ENCODE measurements at regions of chr11 and their contacts with region 1.

Region 1: DNA sequence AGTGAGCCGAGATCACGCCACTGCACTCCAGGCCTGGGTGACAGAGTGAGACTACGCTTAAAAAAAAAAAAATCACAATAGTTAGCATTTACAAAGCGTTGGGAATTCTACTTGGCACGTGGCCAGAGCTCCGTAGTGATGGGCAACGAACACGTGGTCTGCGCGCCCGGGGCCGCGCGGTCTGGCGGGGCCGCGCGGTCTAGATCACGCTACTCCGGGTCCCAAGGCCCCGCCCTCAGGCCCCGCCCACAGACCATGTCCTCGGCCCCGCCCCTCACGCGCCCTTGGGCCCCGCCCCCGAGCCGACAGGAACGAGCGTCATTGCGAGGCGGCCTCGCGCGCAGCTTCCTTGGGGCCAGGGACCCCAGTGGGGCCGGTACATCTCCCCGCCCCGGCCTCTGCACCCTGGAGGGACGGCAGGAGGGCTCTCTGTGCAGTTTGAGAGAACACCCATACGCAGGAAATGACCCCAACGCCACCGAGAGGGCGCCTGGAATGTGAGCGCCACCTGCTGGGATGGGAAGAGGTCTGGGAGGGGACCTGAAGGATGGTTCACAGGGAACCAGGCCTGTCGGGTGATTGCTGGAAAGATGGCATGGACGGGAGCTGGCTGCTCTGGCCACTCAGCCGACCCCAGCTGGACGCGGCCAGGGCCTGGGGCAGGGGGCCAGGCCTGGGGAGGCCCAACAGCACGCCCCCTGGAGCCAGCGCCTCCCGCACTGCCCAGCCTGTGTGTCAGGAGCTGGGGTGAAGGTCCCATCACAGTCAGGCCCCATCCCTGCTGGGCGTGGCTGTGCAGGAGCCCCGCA is 2.0 kb upstream of the PTDSS2 start:
- DNase-seq: peak; percentile 96 to 97
- H3K4me3 ChIP-seq: peak overlapping the region; percentile 39
- H3K4me3 Mint-ChIP-seq: peak overlapping the region; percentile 85
- H3K27ac Mint-ChIP-seq: peak overlapping the region; percentile 77
- H3K4me1 ChIP-seq: peaks cover 41% of the 10 kb centered on the region
- H3K4me1 Mint-ChIP-seq: peaks cover 32% of the 10 kb centered on the region
- H3K27me3 ChIP-seq: no peaks in the 10 kb centered on the region
- H3K27me3 Mint-ChIP-seq: no peaks in the 10 kb centered on the region
- CTCF ChIP-seq: peak; percentile 90 to 98

Region 2: DNA sequence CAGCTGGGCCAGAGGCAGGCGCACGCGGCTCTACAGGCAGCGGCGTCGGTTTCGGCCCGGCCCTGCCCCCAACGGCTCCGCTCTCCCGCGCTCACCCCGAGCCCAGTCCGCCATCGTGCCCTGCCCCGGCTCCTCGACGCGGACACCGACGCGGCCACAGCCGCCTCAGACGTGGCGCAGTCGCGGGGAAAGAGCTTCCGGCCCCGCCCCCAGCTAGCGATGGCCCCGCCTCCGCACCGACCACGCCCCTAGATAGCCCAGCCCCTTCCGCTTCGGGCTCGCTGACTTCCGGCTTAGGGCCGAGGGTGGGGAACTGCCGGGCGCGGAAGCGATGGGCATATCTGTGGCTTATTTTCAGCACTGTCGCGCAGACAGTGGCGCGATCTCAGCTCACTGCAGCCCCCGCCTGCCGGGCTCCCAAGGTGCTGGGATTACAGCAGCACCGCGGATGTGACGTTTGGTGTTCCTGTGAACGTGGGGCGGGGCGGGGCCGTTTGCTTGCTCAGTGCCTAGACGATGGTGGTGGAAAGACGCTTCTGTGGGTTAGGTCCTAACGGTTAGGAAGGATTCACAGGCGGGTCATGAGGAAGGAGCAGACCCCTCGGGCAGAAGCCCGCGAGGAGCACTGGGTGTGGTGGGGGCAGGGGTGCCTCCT is 240.8 kb before region 1 on chr11 and contains the starts of genes BET1L and RIC8A:
- CTCF ChIA-PET with region 1: interaction called, 20 read pairs
- POLR2A ChIA-PET with region 1: interaction called, 8 read pairs
- intact Hi-C with region 1: loop called (anchors 5 kb)
- DNase-seq: peak; percentile 98
- H3K4me3 ChIP-seq: peak within 1 kb of the TSS; percentile 73
- H3K4me3 Mint-ChIP-seq: peak within 1 kb of the TSS; percentile 92
- H3K27ac Mint-ChIP-seq: peak within 1 kb of the TSS; percentile 99
- H3K4me1 ChIP-seq: peaks cover 20% of the 10 kb centered on the region
- H3K4me1 Mint-ChIP-seq: peaks cover 6% of the 10 kb centered on the region
- H3K27me3 ChIP-seq: no peaks in the 10 kb centered on the region
- H3K27me3 Mint-ChIP-seq: no peaks in the 10 kb centered on the region
- CTCF ChIP-seq: no peak
- total RNA-seq, gene BET1L: 56.8 and 57.4 TPM in 2 replicates
- total RNA-seq, gene RIC8A: 97.1 and 111 TPM in 2 replicates

Region 3: GRCh38 chr11:304915-305843 is 142.9 kb before region 1 on chr11:
- CTCF ChIA-PET with region 1: interaction called, 16 read pairs
- POLR2A ChIA-PET with region 1: no interaction called
- intact Hi-C with region 1: loop called (anchors 1 kb)
- DNase-seq: peak; percentile 71 to 75
- H3K4me3 ChIP-seq: no peak overlapping the region
- H3K4me3 Mint-ChIP-seq: peak overlapping the region; percentile 4
- H3K27ac Mint-ChIP-seq: no peak overlapping the region
- H3K4me1 ChIP-seq: peaks cover 43% of the 10 kb centered on the region
- H3K4me1 Mint-ChIP-seq: peaks cover 30% of the 10 kb centered on the region
- H3K27me3 ChIP-seq: no peaks in the 10 kb centered on the region
- H3K27me3 Mint-ChIP-seq: no peaks in the 10 kb centered on the region
- CTCF ChIP-seq: peak; percentile 56 to 82

Region 4: GRCh38 chr11:369336-370018 is 78.7 kb before region 1 on chr11 and contains the start of gene B4GALNT4:
- CTCF ChIA-PET with region 1: interaction called, 14 read pairs
- POLR2A ChIA-PET with region 1: no interaction called
- intact Hi-C with region 1: loop called (anchors 10 kb)
- DNase-seq: peak in 1 of 2 experiments; percentile 60
- H3K4me3 ChIP-seq: peak within 1 kb of the TSS; percentile 56
- H3K4me3 Mint-ChIP-seq: peak within 1 kb of the TSS; percentile 91
- H3K27ac Mint-ChIP-seq: no peak within 1 kb of the TSS
- H3K4me1 ChIP-seq: peaks cover 26% of the 10 kb centered on the region
- H3K4me1 Mint-ChIP-seq: peaks cover 15% of the 10 kb centered on the region
- H3K27me3 ChIP-seq: no peaks in the 10 kb centered on the region
- H3K27me3 Mint-ChIP-seq: peaks cover 2% of the 10 kb centered on the region
- CTCF ChIP-seq: no peak
- total RNA-seq, gene B4GALNT4: 30.7 and 35.6 TPM in 2 replicates

Region 5: GRCh38 chr11:406978-407739 is 41.0 kb before region 1 on chr11:
- CTCF ChIA-PET with region 1: interaction called, 12 read pairs
- POLR2A ChIA-PET with region 1: no interaction called
- intact Hi-C with region 1: loop called (anchors 1 kb)
- DNase-seq: no peak
- H3K4me3 ChIP-seq: no peak overlapping the region
- H3K4me3 Mint-ChIP-seq: no peak overlapping the region
- H3K27ac Mint-ChIP-seq: no peak overlapping the region
- H3K4me1 ChIP-seq: peaks cover 9% of the 10 kb centered on the region
- H3K4me1 Mint-ChIP-seq: no peaks in the 10 kb centered on the region
- H3K27me3 ChIP-seq: no peaks in the 10 kb centered on the region
- H3K27me3 Mint-ChIP-seq: no peaks in the 10 kb centered on the region
- CTCF ChIP-seq: no peak

Region 6: DNA sequence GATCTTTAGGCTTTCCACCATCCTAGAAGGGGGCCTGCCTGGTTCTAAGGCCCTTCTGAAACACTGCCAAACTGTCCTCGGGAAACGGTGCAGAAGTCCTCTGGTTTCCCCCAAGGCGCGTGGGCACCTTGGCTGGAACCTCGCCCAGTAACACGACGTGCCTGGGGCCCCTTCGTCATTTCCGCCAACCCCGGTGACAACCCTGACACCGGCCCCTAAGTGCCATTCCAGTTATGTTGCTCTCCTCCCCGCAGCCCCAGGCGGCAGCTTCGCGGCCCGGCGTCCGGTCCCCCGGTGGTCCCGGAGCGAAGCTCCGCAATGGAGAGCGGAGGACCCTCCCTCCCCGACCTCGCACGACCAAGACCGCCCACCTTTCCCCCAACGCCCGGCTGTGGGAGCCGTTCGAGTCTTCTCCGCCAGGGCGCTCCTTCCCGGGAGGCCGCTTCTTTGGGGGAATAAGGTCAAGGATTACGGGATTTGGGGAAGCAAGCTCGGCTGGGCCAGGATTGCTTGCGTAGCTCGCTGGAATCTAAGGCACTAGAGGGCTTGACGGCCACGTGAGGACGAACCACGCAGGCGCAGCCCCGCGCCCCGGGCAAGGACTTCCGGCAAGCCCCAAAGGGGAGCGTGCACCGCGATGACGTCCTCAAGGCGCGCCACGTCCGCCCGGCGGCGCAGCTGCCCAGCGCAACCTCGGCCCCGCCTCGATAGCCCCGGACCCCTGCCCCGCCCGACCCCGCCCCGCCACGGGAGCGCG is 58.3 kb after region 1 on chr11:
- CTCF ChIA-PET with region 1: interaction called, 4 read pairs
- POLR2A ChIA-PET with region 1: interaction called, 5 read pairs
- intact Hi-C with region 1: loop called (anchors 5 kb)
- DNase-seq: peak; percentile 98 to 99
- H3K4me3 ChIP-seq: peak overlapping the region; percentile 100
- H3K4me3 Mint-ChIP-seq: peak overlapping the region; percentile 96
- H3K27ac Mint-ChIP-seq: peak overlapping the region; percentile 100
- H3K4me1 ChIP-seq: peaks cover 7% of the 10 kb centered on the region
- H3K4me1 Mint-ChIP-seq: no peaks in the 10 kb centered on the region
- H3K27me3 ChIP-seq: no peaks in the 10 kb centered on the region
- H3K27me3 Mint-ChIP-seq: no peaks in the 10 kb centered on the region
- CTCF ChIP-seq: no peak

Region 7: GRCh38 chr11:655036-655726 is 207.1 kb after region 1 on chr11:
- CTCF ChIA-PET with region 1: no interaction called
- POLR2A ChIA-PET with region 1: no interaction called
- intact Hi-C with region 1: no loop called
- DNase-seq: no peak
- H3K4me3 ChIP-seq: no peak overlapping the region
- H3K4me3 Mint-ChIP-seq: no peak overlapping the region
- H3K27ac Mint-ChIP-seq: no peak overlapping the region
- H3K4me1 ChIP-seq: peaks cover 13% of the 10 kb centered on the region
- H3K4me1 Mint-ChIP-seq: peaks cover 5% of the 10 kb centered on the region
- H3K27me3 ChIP-seq: no peaks in the 10 kb centered on the region
- H3K27me3 Mint-ChIP-seq: no peaks in the 10 kb centered on the region
- CTCF ChIP-seq: no peak